Sigmoid colon (tissue), 7 donors: ENCODE measurements at regions of chr7 and their contacts with region 1.

Region 1: DNA sequence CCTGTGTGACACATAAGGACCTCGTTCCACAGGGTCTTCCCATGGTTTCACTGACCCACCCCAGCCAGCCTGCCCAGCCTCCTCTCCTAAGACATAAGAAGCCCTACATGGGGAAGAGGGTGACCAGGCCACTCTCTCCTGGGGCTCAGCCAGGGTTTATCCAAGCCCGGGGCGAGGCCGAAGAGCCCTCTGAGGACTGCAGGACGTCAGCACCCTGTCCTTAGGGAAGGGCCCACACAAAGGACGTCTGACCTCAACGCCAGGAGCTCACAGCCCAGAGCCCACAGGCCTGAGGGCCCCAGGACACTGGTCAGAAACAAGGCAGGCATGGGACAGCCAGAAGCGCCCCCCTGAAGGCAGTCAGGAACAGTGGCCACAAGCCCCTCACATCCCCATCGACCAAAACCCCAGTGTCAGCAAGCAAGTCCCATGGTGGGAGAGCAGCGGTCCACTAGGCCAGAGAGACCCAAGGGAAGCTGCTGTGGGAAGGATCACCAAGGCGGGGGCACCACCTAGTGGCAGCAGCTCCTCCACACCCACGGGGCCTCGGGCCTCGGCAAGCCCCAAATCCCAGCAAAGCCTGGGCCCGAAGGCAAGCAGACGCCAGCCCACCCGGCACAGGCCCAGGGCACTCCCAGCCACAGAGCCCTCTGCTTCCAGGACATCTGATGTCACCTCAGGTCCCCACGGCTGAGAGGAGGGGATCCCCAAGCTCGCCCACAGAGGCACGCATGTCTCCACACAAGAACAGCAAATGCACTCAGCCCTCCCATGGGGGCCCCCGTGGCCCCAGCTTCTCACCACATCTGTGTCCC is 23.4 kb downstream of the MAD1L1 start:
- DNase-seq: peak; percentile 86
- H3K4me3 ChIP-seq: no peak overlapping the region
- H3K27ac ChIP-seq: no peak overlapping the region
- H3K4me1 ChIP-seq: peaks cover 0 to 23% (median 13%) of the 10 kb centered on the region in 4 donors
- H3K27me3 ChIP-seq: no peaks in the 10 kb centered on the region
- CTCF ChIP-seq: peak; percentile 66 to 88 (median 74)
- EP300 ChIP-seq: no peak
- POLR2A ChIP-seq: no peak

Region 2: GRCh38 chr7:1579481-1580421 is 629.6 kb before region 1 on chr7:
- intact Hi-C with region 1: loop called (anchors 5 kb)
- DNase-seq: peak; percentile 83
- H3K4me3 ChIP-seq: no peak overlapping the region
- H3K27ac ChIP-seq: no peak overlapping the region
- H3K4me1 ChIP-seq: peaks cover 0 to 8% (median 6%) of the 10 kb centered on the region in 4 donors
- H3K27me3 ChIP-seq: no peaks in the 10 kb centered on the region
- CTCF ChIP-seq: peak; percentile 56 to 79 (median 72)
- EP300 ChIP-seq: no peak
- POLR2A ChIP-seq: no peak

Region 3: DNA sequence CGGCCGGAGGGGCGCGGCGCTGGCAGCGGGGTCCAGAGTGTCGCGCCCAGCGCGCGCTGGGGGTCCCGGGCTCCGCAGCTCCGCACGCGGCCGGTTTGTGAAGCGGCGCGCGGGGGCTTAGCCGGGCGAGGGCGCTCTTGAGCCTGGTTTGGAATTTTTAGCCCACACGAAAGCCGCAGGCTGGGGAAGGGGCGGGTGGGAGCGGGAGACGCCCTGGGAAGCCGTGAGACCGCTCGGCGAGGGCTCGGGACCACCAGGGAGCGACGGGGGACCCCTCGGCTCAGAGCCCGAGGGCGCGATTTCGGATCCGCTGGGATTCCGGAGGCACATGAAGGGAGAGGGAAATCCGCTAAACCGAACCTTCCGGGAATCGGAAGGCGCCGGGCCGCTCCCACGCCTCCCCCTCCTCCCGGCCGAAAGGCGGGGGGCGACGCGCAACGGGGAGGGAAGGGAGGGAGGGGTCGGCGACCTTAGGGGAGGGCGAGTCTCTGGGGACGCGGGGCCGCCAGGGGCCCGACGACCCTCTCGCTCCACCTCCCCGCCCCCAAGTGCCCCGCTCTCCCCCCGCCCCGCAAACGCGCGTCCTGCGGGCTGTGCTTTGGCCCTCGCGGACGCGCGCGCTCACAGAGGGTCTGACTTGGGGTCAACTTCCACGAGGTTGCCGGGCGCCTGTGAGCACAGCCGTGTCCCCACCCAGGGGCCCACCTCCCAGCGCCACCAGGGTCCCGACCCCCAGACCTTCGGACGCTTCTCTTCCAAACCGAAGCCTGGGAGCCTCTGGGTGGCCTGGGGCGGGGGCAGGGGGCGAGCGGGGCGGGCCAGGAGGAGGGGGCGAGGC is 544.4 kb before region 1 on chr7:
- intact Hi-C with region 1: loop called (anchors 2 kb)
- DNase-seq: peak; percentile 62
- H3K4me3 ChIP-seq: peak overlapping the region; percentile 11 to 57 (median 49)
- H3K27ac ChIP-seq: peak overlapping the region in 3 of 4 donors; percentile 12 to 34 (median 32)
- H3K4me1 ChIP-seq: peaks cover 0 to 50% (median 48%) of the 10 kb centered on the region in 4 donors
- H3K27me3 ChIP-seq: peaks cover 57 to 80% (median 78%) of the 10 kb centered on the region in 3 donors
- CTCF ChIP-seq: peak in 3 of 4 experiments; percentile 17 to 82 (median 25)
- EP300 ChIP-seq: no peak
- POLR2A ChIP-seq: no peak

Region 4: GRCh38 chr7:1812509-1813393 is 396.6 kb before region 1 on chr7:
- intact Hi-C with region 1: loop called (anchors 10 kb)
- DNase-seq: no peak
- H3K4me3 ChIP-seq: no peak overlapping the region
- H3K27ac ChIP-seq: no peak overlapping the region
- H3K4me1 ChIP-seq: peaks cover 0 to 17% (median 10%) of the 10 kb centered on the region in 4 donors
- H3K27me3 ChIP-seq: peaks cover 0 to 4% (median 0%) of the 10 kb centered on the region in 3 donors
- CTCF ChIP-seq: no peak
- EP300 ChIP-seq: no peak
- POLR2A ChIP-seq: no peak

Region 5: GRCh38 chr7:2104107-2104710 is 105.1 kb before region 1 on chr7:
- intact Hi-C with region 1: loop called (anchors 1 kb)
- DNase-seq: peak; percentile 97
- H3K4me3 ChIP-seq: peak overlapping the region in 3 of 4 donors; percentile 15 to 24 (median 23)
- H3K27ac ChIP-seq: peak overlapping the region; percentile 56 to 77 (median 72)
- H3K4me1 ChIP-seq: peaks cover 0 to 32% (median 27%) of the 10 kb centered on the region in 4 donors
- H3K27me3 ChIP-seq: no peaks in the 10 kb centered on the region
- CTCF ChIP-seq: peak; percentile 65 to 82 (median 76)
- EP300 ChIP-seq: peak in 2 of 4 donors; percentile 34 to 69
- POLR2A ChIP-seq: no peak

Region 6: GRCh38 chr7:2258661-2259365 is 49.5 kb after region 1 on chr7:
- intact Hi-C with region 1: no loop called
- DNase-seq: no peak
- H3K4me3 ChIP-seq: no peak overlapping the region
- H3K27ac ChIP-seq: no peak overlapping the region
- H3K4me1 ChIP-seq: no peaks in the 10 kb centered on the region
- H3K27me3 ChIP-seq: no peaks in the 10 kb centered on the region
- CTCF ChIP-seq: no peak
- EP300 ChIP-seq: no peak
- POLR2A ChIP-seq: no peak

Region 7: GRCh38 chr7:2709553-2710285 is 500.4 kb after region 1 on chr7:
- intact Hi-C with region 1: no loop called
- DNase-seq: no peak
- H3K4me3 ChIP-seq: no peak overlapping the region
- H3K27ac ChIP-seq: no peak overlapping the region
- H3K4me1 ChIP-seq: peaks cover 0 to 14% (median 10%) of the 10 kb centered on the region in 4 donors
- H3K27me3 ChIP-seq: no peaks in the 10 kb centered on the region
- CTCF ChIP-seq: peak; percentile 23 to 88 (median 74)
- EP300 ChIP-seq: no peak
- POLR2A ChIP-seq: no peak